MCF 10A (cell line): ENCODE measurements at regions of chr3 and their contacts with region 1.

Region 1: GRCh38 chr3:111610189-111610588 is 15.0 kb upstream of the ZBED2 start:
- DNase-seq: peak; percentile 55
- H3K4me3 Mint-ChIP-seq: peak overlapping the region; percentile 70
- H3K27ac Mint-ChIP-seq: peak overlapping the region; percentile 89
- H3K4me1 Mint-ChIP-seq: peaks cover 25% of the 10 kb centered on the region
- H3K27me3 Mint-ChIP-seq: no peaks in the 10 kb centered on the region
- CTCF ChIP-seq: no peak

Region 2: DNA sequence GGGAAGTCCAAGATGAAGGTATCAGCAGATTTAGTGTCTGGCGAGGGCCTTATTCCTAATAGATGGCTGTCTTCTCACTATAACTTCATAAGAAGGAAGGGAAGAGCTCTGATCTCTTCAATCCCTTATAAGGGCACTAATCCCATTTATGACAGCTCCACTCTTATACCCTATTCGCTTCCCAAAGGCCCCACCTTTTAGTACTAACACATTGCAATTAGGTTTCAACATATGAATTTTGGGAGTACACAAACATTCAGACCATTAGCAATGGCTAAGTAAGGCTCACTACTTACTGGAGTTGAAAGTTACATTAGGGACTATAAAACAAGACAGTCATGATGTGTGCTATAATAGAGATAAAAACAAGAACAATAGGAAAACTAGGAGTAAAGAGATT is 419.7 kb before region 1 on chr3:
- CTCF ChIA-PET with region 1: no interaction called
- POLR2A ChIA-PET with region 1: no interaction called
- intact Hi-C with region 1: no loop called
- DNase-seq: no peak
- H3K4me3 Mint-ChIP-seq: no peak overlapping the region
- H3K27ac Mint-ChIP-seq: no peak overlapping the region
- H3K4me1 Mint-ChIP-seq: no peaks in the 10 kb centered on the region
- H3K27me3 Mint-ChIP-seq: no peaks in the 10 kb centered on the region
- CTCF ChIP-seq: no peak

Region 3: GRCh38 chr3:111585214-111585613 is 25.0 kb before region 1 on chr3:
- CTCF ChIA-PET with region 1: interaction called, 45 read pairs
- POLR2A ChIA-PET with region 1: interaction called, 19 read pairs
- intact Hi-C with region 1: loop called (anchors 2 kb)
- DNase-seq: peak; percentile 84
- H3K4me3 Mint-ChIP-seq: no peak overlapping the region
- H3K27ac Mint-ChIP-seq: peak overlapping the region; percentile 88
- H3K4me1 Mint-ChIP-seq: peaks cover 59% of the 10 kb centered on the region
- H3K27me3 Mint-ChIP-seq: no peaks in the 10 kb centered on the region
- CTCF ChIP-seq: no peak

Region 4: GRCh38 chr3:111594205-111594604 is 16.0 kb before region 1 on chr3:
- CTCF ChIA-PET with region 1: interaction called, 18 read pairs
- POLR2A ChIA-PET with region 1: interaction called, 51 read pairs
- intact Hi-C with region 1: no loop called
- DNase-seq: peak; percentile 75
- H3K4me3 Mint-ChIP-seq: peak overlapping the region; percentile 64
- H3K27ac Mint-ChIP-seq: peak overlapping the region; percentile 82
- H3K4me1 Mint-ChIP-seq: peaks cover 70% of the 10 kb centered on the region
- H3K27me3 Mint-ChIP-seq: no peaks in the 10 kb centered on the region
- CTCF ChIP-seq: no peak

Region 5: DNA sequence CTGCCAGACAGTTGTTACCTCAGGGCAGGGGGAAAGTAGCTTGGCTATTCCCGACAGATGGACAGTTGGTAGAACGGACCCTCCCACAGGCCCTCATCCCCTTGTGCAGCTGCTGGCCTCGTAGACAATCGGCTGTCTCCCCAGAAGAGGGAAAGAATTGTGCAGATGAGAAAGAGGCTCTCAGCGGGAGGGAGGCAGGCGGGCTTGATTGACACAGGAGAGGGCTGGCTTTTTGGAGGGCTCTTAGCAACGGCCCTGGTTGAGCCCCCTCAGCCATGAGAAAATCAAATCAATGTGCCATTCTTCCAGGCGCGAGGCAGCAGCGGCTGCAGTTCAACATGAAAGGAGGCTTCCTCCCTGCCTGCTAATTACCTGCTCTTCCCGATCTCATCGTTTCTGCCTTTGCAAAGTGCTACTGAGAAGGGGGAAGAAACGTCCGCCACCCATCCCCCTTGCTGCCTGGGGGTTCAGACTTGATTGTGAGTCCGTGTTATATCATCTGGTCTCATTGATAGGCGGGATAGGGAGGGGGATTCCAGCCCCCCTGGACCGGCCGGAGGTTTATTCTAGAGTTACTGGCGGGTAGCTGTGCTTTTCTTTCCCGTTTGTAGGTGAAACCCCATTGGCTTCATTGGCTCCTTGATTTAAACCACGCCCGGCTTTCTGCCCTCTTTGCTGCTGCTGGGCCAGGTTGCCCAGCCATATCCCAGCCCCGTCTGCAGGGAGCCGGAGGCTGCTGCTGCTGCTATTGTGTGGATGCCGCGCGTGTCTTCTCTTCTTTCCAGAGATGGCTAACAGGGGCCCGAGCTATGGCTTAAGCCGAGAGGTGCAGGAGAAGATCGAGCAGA is 388.7 kb after region 1 on chr3 and contains the start of gene TAGLN3:
- CTCF ChIA-PET with region 1: no interaction called
- POLR2A ChIA-PET with region 1: no interaction called
- intact Hi-C with region 1: no loop called
- DNase-seq: peak; percentile 29
- H3K4me3 Mint-ChIP-seq: peak within 1 kb of the TSS; percentile 50
- H3K27ac Mint-ChIP-seq: no peak within 1 kb of the TSS
- H3K4me1 Mint-ChIP-seq: peaks cover 9% of the 10 kb centered on the region
- H3K27me3 Mint-ChIP-seq: no peaks in the 10 kb centered on the region
- CTCF ChIP-seq: no peak
- total RNA-seq, gene TAGLN3: not detected in 2 replicates